ENCODE measurements at regions of chr20 and their contacts with region 1.

Region 1: DNA sequence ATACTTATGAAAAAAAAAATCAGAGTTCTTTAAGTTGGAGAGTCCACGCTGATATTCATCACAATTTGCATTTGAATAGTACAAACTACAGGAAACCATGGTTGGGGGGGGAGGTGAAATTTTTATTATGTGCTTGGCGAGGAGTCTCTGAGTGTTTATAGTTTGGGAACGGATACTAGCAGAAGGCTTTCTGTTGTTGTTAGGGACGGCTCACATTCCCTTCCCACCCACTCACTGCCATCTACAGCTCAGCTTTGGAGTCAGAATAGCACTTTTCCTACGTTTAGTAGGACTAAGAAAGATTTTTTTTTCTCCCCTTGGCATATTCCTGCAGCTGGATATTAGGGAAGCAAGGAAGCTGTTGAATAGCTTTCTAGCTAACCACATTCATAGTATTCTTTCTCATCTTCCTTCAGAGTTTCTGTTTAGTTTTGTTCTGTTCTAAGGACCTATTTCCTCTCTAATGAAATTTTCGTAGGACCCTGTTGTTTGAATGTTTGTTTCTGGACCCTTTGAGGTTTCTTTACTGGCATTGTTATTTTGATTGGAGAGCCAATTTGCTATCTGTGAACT is 235.1 kb upstream of the ZNF217 start:
- DNase-seq: peak in 1 of 2 experiments; percentile 49
- H3K4me3 ChIP-seq: peak overlapping the region; percentile 56
- H3K27ac ChIP-seq: peak overlapping the region; percentile 100
- H3K4me1 ChIP-seq: peaks cover 55% of the 10 kb centered on the region
- H3K27me3 ChIP-seq: no peaks in the 10 kb centered on the region
- CTCF ChIP-seq: peak; percentile 46

Region 2: GRCh38 chr20:53578492-53579222 is 250.1 kb before region 1 on chr20:
- CTCF ChIA-PET with region 1: no interaction called
- POLR2A ChIA-PET with region 1: no interaction called
- intact Hi-C with region 1: loop called (anchors 1 kb)
- DNase-seq: peak; percentile 61 to 77
- H3K4me3 ChIP-seq: peak overlapping the region; percentile 49
- H3K27ac ChIP-seq: peak overlapping the region; percentile 91
- H3K4me1 ChIP-seq: peaks cover 64% of the 10 kb centered on the region
- H3K27me3 ChIP-seq: no peaks in the 10 kb centered on the region
- CTCF ChIP-seq: peak; percentile 96

Region 3: DNA sequence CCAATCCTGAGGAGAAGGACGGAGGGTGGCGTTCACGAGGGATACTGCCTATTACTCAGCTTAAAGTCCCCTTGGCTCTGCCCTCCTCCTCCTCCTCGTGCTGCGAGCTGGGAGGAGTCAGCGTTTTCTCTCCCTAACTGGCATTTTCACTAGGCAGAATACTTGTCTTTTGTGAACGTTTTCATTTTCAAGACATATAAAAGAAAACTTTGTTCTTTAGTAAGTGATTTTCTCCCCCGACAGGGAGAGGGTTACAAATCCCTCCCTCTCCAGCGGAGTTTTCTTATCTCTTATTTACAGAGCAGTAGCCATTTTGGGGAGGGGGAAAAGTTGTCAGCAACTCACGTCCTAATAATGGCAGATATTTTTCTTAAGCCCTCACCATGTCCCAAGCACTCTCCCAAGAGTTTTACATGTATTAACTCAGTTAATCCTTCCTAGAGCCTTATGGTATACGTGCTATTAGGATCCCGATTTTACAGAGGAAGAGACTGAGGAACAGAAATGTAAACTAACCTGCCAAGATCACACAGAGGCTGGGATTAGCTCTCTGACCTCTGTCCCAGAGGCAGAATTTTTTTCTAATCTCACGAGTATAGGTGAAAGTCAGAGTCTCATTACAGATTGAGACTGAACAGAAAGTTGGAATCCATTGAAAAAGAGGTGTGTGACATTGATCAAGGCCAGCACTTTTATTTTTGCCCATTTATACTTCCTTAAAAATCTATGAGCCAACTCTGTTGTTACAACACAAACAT is 205.1 kb before region 1 on chr20:
- CTCF ChIA-PET with region 1: no interaction called
- POLR2A ChIA-PET with region 1: no interaction called
- intact Hi-C with region 1: loop called (anchors 1 kb)
- DNase-seq: peak; percentile 62 to 69
- H3K4me3 ChIP-seq: peak overlapping the region; percentile 58
- H3K27ac ChIP-seq: peak overlapping the region; percentile 98
- H3K4me1 ChIP-seq: peaks cover 57% of the 10 kb centered on the region
- H3K27me3 ChIP-seq: no peaks in the 10 kb centered on the region
- CTCF ChIP-seq: no peak

Region 4: GRCh38 chr20:53750827-53751619 is 77.7 kb before region 1 on chr20:
- CTCF ChIA-PET with region 1: no interaction called
- POLR2A ChIA-PET with region 1: interaction called, 13 read pairs
- intact Hi-C with region 1: loop called (anchors 1 kb)
- DNase-seq: no peak
- H3K4me3 ChIP-seq: no peak overlapping the region
- H3K27ac ChIP-seq: peak overlapping the region; percentile 98
- H3K4me1 ChIP-seq: peaks cover 83% of the 10 kb centered on the region
- H3K27me3 ChIP-seq: no peaks in the 10 kb centered on the region
- CTCF ChIP-seq: no peak

Region 5: DNA sequence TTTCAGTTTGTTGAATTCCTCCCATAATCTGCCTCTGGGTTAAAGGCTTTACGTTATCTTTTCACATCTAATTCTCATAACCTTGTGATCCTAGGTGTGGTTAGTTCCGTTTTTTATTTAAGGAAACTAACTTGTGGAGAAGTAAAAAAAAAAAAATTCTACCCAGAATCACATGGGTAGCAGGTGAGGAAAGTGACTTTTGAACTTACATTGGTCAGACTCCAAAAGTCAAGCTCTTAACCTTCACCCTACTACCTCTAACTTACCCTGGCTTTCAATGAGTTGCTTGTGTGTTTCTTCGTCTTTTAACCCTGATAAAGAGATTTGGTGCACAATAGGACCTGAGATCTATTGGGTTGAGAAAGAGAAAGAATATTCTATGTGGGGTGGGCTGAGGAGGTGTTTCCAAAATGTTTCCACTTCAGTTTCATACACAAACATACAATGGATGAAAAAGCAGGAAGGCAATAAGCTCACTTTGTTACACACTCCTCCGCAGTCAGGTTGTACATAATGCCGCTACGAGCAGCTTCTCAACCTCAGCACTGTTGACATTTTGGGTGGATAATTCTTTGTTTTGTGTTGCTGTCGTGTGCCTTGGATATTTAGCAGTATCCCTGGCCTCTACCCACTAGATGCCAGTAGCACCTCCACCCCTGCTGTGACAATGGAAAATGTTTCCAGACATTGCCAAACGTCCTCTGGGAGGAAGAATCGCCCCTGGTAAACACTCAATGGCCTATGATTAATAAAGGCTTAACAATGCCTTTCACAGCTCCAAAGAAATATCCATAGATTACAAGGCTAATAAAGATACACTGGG is 42.1 kb before region 1 on chr20:
- CTCF ChIA-PET with region 1: no interaction called
- POLR2A ChIA-PET with region 1: interaction called, 9 read pairs
- intact Hi-C with region 1: loop called (anchors 1 kb)
- DNase-seq: peak; percentile 44 to 97
- H3K4me3 ChIP-seq: peak overlapping the region; percentile 40; the same call in 1 of the 2 replicates
- H3K27ac ChIP-seq: peak overlapping the region; percentile 98
- H3K4me1 ChIP-seq: peaks cover 68% of the 10 kb centered on the region
- H3K27me3 ChIP-seq: no peaks in the 10 kb centered on the region
- CTCF ChIP-seq: no peak; the same call in 1 of the 2 replicates

Region 6: DNA sequence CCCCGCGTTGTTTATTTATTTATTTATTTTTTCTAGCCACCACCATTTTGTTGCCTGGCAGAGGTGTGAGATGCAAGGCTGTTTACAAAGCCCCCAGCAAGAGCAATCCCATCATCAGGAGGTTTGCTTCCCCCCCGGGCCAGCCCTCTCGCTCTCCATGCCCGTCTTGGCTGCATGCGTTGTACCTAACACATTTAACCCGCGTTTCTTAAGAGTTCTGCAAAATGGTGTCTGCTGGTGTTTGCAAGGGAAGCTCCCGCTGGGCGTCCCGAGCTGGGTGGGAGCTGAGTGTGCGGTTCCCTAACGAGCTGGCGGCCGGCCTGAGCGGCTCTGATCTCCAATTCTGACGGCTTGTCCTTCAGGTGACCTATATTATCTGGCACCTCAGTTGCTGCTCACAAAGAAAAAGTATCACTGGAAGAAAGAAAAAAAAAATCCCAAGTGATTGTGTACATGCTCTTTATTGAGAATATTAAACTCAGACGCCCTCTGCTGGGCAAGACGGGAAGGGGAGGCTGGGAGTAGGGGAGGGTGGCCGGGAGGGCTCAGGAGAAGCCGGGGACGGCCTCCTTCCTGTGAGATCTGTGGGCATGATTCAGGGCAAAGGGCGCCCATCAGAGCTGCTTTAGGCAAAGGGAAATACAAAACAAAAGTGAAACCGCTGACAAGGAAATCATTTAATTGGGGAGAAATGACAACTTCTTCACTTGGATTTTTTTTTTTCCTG is 86.8 kb after region 1 on chr20:
- CTCF ChIA-PET with region 1: interaction called, 4 read pairs
- POLR2A ChIA-PET with region 1: no interaction called
- intact Hi-C with region 1: loop called (anchors 1 kb)
- DNase-seq: peak; percentile 95 to 98
- H3K4me3 ChIP-seq: peak overlapping the region; percentile 61
- H3K27ac ChIP-seq: peak overlapping the region; percentile 93
- H3K4me1 ChIP-seq: peaks cover 47% of the 10 kb centered on the region
- H3K27me3 ChIP-seq: no peaks in the 10 kb centered on the region
- CTCF ChIP-seq: peak; percentile 97

Measured in PC-9 (cell line).